Activated CD4-positive, alpha-beta memory T cell treated with anti-CD3 and anti-CD28 coated beads, Interleukin-2, amount 10 ng/mL, durations not matched to agents 7 days and 5 days (primary cell): ENCODE measurements at regions of chr13 and their contacts with region 1.

Region 1: DNA sequence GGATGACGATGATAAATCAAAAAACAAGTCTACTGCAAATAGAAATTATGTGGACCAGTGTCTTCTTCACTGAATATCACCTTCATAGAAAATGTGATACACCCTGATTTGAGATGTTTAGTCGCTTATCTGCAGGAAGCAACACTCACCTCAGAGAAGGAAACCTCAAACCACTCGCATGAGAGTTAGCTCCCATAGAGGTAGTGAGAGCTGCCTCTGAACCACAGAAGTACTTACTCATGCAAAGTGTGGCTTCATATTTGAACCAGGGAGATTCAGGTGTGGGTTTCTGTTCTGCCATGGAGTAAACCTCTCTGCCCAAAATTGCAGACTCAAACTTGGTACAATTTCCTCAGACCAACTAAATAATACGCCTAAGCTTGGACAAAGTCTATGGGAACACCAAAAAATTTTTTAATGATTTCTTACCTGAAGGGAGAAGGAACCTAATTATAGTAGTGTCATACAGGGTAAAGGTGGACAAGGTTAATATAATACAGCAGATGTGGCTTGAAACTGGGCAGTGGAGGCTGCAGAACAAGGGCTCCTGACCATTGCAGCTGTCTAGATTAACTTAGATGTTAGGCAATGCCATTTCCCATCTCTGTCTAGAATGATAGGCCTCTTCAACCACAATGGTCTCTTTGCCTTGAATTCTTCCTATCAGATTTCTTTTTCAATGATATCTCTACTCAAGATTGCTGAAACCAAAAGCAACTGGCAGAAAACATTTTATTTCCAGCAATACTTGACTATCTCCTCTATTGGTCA is 29.6 kb upstream of the RCBTB2 start:
- DNase-seq: peak; percentile 86
- H3K4me3 Mint-ChIP-seq: peak overlapping the region; percentile 47
- H3K27ac Mint-ChIP-seq: peak overlapping the region; percentile 78
- H3K4me1 Mint-ChIP-seq: peaks cover 61% of the 10 kb centered on the region
- H3K27me3 Mint-ChIP-seq: peaks cover 46% of the 10 kb centered on the region

Region 2: DNA sequence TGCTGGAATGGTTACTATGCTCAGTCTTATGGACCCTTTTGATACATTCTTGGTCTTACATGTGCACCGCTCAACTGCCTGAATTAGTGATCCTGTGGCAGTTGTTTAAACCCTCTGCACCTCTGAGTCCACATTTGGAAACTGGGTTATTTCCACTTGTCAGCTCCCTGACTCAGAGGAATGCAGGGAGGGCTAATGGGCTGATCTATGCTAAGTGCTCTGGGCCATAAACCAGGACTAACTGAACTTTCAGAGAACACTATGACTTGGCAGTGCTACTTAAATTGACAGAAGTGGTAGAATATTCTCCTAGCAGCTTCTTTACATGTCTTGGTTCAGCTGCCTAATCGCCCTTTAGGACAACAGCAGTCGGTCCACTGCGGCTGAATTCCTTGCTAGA is 440.7 kb before region 1 on chr13:
- CTCF ChIA-PET with region 1: no interaction called
- POLR2A ChIA-PET with region 1: no interaction called
- DNase-seq: no peak
- H3K4me3 Mint-ChIP-seq: no peak overlapping the region
- H3K27ac Mint-ChIP-seq: no peak overlapping the region
- H3K4me1 Mint-ChIP-seq: peaks cover 4% of the 10 kb centered on the region
- H3K27me3 Mint-ChIP-seq: peaks cover 3% of the 10 kb centered on the region

Region 3: DNA sequence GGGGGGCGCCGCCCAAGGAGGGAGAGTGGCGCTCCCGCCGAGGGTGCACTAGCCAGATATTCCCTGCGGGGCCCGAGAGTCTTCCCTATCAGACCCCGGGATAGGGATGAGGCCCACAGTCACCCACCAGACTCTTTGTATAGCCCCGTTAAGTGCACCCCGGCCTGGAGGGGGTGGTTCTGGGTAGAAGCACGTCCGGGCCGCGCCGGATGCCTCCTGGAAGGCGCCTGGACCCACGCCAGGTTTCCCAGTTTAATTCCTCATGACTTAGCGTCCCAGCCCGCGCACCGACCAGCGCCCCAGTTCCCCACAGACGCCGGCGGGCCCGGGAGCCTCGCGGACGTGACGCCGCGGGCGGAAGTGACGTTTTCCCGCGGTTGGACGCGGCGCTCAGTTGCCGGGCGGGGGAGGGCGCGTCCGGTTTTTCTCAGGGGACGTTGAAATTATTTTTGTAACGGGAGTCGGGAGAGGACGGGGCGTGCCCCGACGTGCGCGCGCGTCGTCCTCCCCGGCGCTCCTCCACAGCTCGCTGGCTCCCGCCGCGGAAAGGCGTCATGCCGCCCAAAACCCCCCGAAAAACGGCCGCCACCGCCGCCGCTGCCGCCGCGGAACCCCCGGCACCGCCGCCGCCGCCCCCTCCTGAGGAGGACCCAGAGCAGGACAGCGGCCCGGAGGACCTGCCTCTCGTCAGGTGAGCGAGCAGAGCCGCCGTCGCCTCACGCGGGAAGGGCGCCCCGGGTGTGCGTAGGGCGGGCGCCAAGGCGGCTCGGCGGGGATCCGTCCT is 258.9 kb before region 1 on chr13 and contains the start of gene RB1:
- CTCF ChIA-PET with region 1: no interaction called
- POLR2A ChIA-PET with region 1: interaction called, 10 read pairs
- DNase-seq: peak; percentile 93
- H3K4me3 Mint-ChIP-seq: peak within 1 kb of the TSS; percentile 95
- H3K27ac Mint-ChIP-seq: peak within 1 kb of the TSS; percentile 92
- H3K4me1 Mint-ChIP-seq: peaks cover 28% of the 10 kb centered on the region
- H3K27me3 Mint-ChIP-seq: no peaks in the 10 kb centered on the region
- total RNA-seq, gene RB1: 40.2 to 41.3 TPM

Region 4: GRCh38 chr13:48400850-48401291 is 161.6 kb before region 1 on chr13:
- CTCF ChIA-PET with region 1: interaction called, 3 read pairs
- POLR2A ChIA-PET with region 1: interaction called, 21 read pairs
- DNase-seq: no peak
- H3K4me3 Mint-ChIP-seq: peak overlapping the region; percentile 38
- H3K27ac Mint-ChIP-seq: peak overlapping the region; percentile 74
- H3K4me1 Mint-ChIP-seq: peaks cover 61% of the 10 kb centered on the region
- H3K27me3 Mint-ChIP-seq: no peaks in the 10 kb centered on the region

Region 5: GRCh38 chr13:48412881-48413351 is 149.6 kb before region 1 on chr13 and contains the start of gene LPAR6:
- CTCF ChIA-PET with region 1: no interaction called
- POLR2A ChIA-PET with region 1: interaction called, 31 read pairs
- DNase-seq: peak; percentile 26
- H3K4me3 Mint-ChIP-seq: peak within 1 kb of the TSS; percentile 99
- H3K27ac Mint-ChIP-seq: peak within 1 kb of the TSS; percentile 96
- H3K4me1 Mint-ChIP-seq: peaks cover 42% of the 10 kb centered on the region
- H3K27me3 Mint-ChIP-seq: no peaks in the 10 kb centered on the region
- total RNA-seq, gene LPAR6: 96.8 to 100 TPM

Region 6: DNA sequence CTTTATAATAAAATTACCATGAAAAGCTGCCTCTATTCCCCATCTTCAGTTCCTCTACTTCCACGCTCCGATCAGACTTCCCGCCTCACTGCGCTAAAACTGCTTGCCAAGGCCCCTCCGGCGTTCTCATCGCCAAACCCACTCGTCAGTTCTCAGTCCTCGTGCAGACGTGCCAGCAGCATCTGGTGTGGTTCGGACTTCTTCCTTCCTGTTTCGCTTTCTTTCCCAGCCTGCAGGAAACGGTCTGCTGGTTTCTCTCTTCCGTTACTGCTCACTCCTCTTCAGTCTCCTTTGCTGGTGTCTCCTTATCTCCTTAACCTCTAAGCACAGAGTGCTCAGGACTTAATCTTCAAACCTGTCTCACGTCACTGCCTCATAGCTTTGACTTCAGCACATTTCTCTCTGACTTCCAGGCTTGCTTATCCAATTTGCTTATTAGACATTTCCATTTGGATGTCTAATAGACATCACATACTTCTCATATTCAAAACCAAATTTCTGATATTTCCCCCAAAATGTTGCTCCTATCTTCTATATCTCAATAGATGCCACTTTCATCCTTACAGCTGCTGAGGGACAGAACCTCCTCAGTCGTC is 69.9 kb before region 1 on chr13:
- CTCF ChIA-PET with region 1: interaction called, 15 read pairs
- POLR2A ChIA-PET with region 1: interaction called, 124 read pairs
- DNase-seq: peak; percentile 85
- H3K4me3 Mint-ChIP-seq: no peak overlapping the region
- H3K27ac Mint-ChIP-seq: no peak overlapping the region
- H3K4me1 Mint-ChIP-seq: peaks cover 69% of the 10 kb centered on the region
- H3K27me3 Mint-ChIP-seq: no peaks in the 10 kb centered on the region

Region 7: DNA sequence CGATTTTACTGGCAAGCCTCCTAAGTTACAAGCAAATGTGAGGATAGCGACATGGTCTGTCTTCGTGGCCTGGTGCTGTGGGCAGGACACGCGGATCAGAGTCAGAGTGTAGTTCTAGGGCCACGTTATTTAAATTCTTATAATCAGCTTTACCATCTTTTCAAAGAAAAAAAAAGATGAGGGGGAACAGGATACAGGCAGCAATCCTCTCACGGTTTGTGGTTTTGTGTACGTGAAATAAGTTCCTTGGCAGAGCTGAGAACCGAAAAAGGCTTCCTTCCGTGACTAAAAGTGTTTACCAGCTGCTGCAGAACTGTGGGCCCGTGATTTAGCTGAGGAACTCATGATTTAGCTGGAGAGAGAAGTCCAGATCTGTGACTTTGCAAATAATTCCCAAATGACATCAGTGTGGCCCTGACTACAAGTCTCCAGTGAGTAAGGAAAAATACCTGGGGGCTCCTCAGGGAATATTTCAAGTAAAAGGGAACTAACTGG is 56.8 kb before region 1 on chr13:
- CTCF ChIA-PET with region 1: interaction called, 12 read pairs
- POLR2A ChIA-PET with region 1: interaction called, 77 read pairs
- DNase-seq: peak; percentile 74
- H3K4me3 Mint-ChIP-seq: peak overlapping the region; percentile 50
- H3K27ac Mint-ChIP-seq: peak overlapping the region; percentile 98
- H3K4me1 Mint-ChIP-seq: peaks cover 82% of the 10 kb centered on the region
- H3K27me3 Mint-ChIP-seq: no peaks in the 10 kb centered on the region

Region 8: GRCh38 chr13:48526286-48526685 is 36.2 kb before region 1 on chr13:
- CTCF ChIA-PET with region 1: no interaction called
- POLR2A ChIA-PET with region 1: interaction called, 134 read pairs
- DNase-seq: peak; percentile 57
- H3K4me3 Mint-ChIP-seq: no peak overlapping the region
- H3K27ac Mint-ChIP-seq: peak overlapping the region; percentile 29
- H3K4me1 Mint-ChIP-seq: peaks cover 52% of the 10 kb centered on the region
- H3K27me3 Mint-ChIP-seq: peaks cover 1% of the 10 kb centered on the region